Heart left ventricle (tissue), 16 donors: ENCODE measurements at regions of chr1 and their contacts with region 1.

Region 1: DNA sequence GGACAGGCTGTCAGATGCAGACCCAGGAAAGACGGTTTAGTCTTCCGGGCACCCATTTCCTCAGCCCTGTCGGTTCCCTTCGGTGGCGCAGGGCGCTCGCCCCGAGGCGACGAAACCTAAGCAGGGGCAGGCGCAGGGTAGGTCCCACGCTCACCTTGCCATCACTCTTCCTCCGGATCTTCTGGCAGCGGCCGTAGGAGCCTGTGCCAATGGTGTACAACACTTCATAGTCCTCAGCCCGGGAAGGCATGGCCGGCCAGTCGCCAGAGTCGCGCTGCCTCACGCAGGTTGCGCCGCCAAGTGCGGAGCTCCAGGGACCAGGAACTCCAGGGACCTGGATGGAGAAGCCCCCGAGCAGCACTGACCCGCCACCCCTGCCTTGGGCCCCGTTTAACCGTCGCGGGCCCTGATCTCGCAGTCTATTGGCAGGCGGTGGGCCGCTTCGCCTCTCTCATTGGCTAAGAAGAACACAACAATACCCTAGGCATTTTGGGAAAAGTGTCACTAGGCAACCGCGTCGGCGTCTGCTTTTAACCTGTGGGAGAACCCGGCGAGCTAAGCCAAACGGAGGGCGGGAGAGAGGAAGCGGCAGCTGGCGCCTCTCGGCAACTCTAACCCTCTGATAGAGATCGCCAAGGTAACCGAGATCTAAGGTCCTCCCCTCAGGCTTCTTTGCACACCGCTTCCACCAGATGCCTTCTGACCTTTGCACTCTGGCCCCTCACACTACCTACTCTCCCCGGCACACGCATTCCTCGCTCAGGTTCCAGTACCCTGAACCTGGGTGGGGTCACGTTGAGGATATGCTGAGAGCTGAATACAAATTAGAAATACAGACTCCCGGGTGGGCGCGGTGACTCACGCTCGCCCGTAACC is at the start of gene NEK2:
- DNase-seq: peak; percentile 87 to 93 (median 89)
- ATAC-seq: peak; percentile 94 to 100 (median 99)
- H3K4me3 ChIP-seq: peak within 1 kb of the TSS; percentile 12 to 74 (median 59)
- H3K27ac ChIP-seq: no peak within 1 kb of the TSS
- H3K4me1 ChIP-seq: peaks cover 0 to 20% (median 5%) of the 10 kb centered on the region in 12 donors
- H3K27me3 ChIP-seq: no peaks in the 10 kb centered on the region
- CTCF ChIP-seq: no peak
- POLR2A ChIP-seq: no peak
- total RNA-seq, gene NEK2: 0.16 to 2.5 (median 0.34) TPM in 5 of 9 donors, not detected in the others

Region 2: GRCh38 chr1:212035123-212035834 is 359.8 kb after region 1 on chr1 and contains the starts of genes DTL and INTS7:
- intact Hi-C with region 1: loop called in 7 of 10 experiments (anchors 1 to 10 kb)
- DNase-seq: peak; percentile 99 to 100 (median 99)
- ATAC-seq: peak; percentile 98 to 99 (median 98)
- H3K4me3 ChIP-seq: peak within 1 kb of the TSS; percentile 35 to 79 (median 62)
- H3K27ac ChIP-seq: peak within 1 kb of the TSS; percentile 72 to 93 (median 88)
- H3K4me1 ChIP-seq: peaks cover 0 to 49% (median 22%) of the 10 kb centered on the region in 12 donors
- H3K27me3 ChIP-seq: no peaks in the 10 kb centered on the region
- CTCF ChIP-seq: peak; percentile 87 to 99 (median 94)
- POLR2A ChIP-seq: peak in 1 of 2 donors; percentile 48
- total RNA-seq, gene DTL: 0.20 to 6.2 (median 0.47) TPM in 8 of 9 donors, not detected in the other
- total RNA-seq, gene INTS7: 5.8 to 12.9 (median 9.5) TPM